Posterior cingulate gyrus (tissue), 11 donors: ENCODE measurements at regions of chr17 and their contacts with region 1.

Region 1: GRCh38 chr17:1648963-1649843 is 463 bp downstream of the RILP start:
- DNase-seq: peak; percentile 90 to 99 (median 94)

Region 2: GRCh38 chr17:1628856-1629646 is 20.2 kb before region 1 on chr17:
- intact Hi-C with region 1: loop called (anchors 2 kb)
- DNase-seq: peak; percentile 94 to 99 (median 96)